ENCODE measurements at regions of chr2 and their contacts with region 1.

Region 1: GRCh38 chr2:157509744-157510143 is 65.9 kb upstream of the CYTIP start:
- DNase-seq: no peak
- ATAC-seq: no peak
- H3K4me3 ChIP-seq: no peak overlapping the region
- H3K4me3 Mint-ChIP-seq: no peak overlapping the region
- H3K27ac ChIP-seq: no peak overlapping the region
- H3K27ac Mint-ChIP-seq: no peak overlapping the region
- H3K4me1 ChIP-seq: no peaks in the 10 kb centered on the region
- H3K4me1 Mint-ChIP-seq: no peaks in the 10 kb centered on the region
- H3K27me3 ChIP-seq: peaks cover 0 to 3% of the 10 kb centered on the region in 2 experiments
- H3K27me3 Mint-ChIP-seq: peaks cover 11% of the 10 kb centered on the region
- CTCF ChIP-seq: peak; percentile 17

Region 2: DNA sequence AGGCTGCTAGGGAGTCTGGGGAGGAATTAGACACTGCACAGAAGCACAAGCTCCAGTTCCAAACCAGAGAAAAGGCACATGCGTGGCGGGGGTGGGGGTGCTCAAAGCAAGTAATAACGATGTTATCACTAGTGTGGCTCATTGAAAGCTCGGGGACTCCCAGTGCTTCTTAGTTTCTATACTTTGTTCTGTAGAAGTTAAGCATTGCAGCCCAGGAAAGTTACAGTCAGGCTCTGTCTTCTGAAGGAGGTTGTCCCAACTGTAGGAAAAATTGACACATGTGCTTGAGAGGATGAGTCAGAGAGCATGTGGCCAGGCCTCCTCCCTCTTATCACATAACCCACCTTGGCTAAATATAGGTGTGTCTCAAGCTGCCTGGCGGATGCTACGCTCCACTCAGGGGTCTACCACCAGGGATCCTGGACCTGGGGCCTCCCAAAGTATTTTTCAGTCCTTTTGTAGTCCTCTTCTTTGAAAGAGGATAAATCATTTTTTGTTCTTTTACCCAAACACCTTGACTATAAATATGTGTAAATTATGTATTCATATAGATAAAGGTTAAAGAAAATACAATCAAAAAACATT is 248.5 kb before region 1 on chr2:
- CTCF ChIA-PET with region 1: no interaction called
- POLR2A ChIA-PET with region 1: no interaction called
- intact Hi-C with region 1: no loop called
- DNase-seq: no peak
- ATAC-seq: no peak
- H3K4me3 ChIP-seq: no peak overlapping the region
- H3K4me3 Mint-ChIP-seq: no peak overlapping the region
- H3K27ac ChIP-seq: no peak overlapping the region
- H3K27ac Mint-ChIP-seq: no peak overlapping the region
- H3K4me1 ChIP-seq: peaks cover 5% of the 10 kb centered on the region
- H3K4me1 Mint-ChIP-seq: peaks cover 8% of the 10 kb centered on the region
- H3K27me3 ChIP-seq: no peaks in the 10 kb centered on the region
- H3K27me3 Mint-ChIP-seq: no peaks in the 10 kb centered on the region
- CTCF ChIP-seq: no peak

Region 3: GRCh38 chr2:158099716-158100115 is 590.0 kb after region 1 on chr2:
- CTCF ChIA-PET with region 1: no interaction called
- POLR2A ChIA-PET with region 1: no interaction called
- intact Hi-C with region 1: no loop called
- DNase-seq: no peak
- ATAC-seq: no peak
- H3K4me3 ChIP-seq: no peak overlapping the region
- H3K4me3 Mint-ChIP-seq: no peak overlapping the region
- H3K27ac ChIP-seq: no peak overlapping the region
- H3K27ac Mint-ChIP-seq: no peak overlapping the region
- H3K4me1 ChIP-seq: no peaks in the 10 kb centered on the region
- H3K4me1 Mint-ChIP-seq: no peaks in the 10 kb centered on the region
- H3K27me3 ChIP-seq: no peaks in the 10 kb centered on the region
- H3K27me3 Mint-ChIP-seq: peaks cover 4% of the 10 kb centered on the region
- CTCF ChIP-seq: no peak

Region 4: DNA sequence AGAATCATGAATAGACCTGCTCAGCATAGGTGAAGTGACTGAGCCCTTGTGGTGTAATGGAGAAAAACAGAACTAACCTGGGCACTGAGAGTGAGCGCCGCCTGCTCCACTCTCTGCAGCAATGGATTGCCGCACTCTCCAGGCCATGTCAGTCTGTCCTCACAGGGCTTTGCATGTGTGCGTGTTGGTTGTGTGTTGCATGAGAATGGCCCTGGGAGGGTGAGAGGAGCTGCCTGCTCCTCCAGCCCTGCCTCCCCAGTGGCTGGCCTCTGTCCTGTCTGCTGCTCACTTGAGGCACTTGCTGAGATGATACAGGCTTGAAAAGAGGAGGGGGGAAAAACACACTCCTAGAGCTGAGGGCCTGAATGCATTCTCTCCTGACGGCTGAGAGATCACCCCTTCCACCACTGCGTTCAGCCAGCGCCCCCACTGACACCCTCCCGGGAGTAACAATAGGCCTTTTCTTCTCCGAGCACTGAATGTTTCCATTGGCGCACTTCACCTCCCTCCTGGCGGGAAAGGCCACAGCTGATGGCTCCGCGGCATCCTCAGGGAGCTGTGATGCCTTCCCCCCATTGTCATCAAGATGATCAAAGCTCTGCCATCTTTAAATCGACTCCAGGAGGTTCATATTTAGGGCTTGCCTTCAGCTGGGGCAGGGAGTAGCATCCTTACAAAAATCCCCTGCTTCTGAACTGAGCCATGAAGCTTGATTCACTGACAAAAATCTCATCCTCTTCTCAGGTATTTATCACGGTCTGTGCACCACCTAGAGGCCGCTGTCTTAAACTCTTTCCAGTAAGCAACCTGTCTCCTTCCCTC is 1235.5 kb after region 1 on chr2:
- CTCF ChIA-PET with region 1: no interaction called
- POLR2A ChIA-PET with region 1: no interaction called
- intact Hi-C with region 1: loop called in 1 of 2 experiments (anchors 10 kb)
- DNase-seq: peak in 12 of 14 experiments; percentile 3 to 56 (median 17)
- ATAC-seq: peak; percentile 43
- H3K4me3 ChIP-seq: no peak overlapping the region
- H3K4me3 Mint-ChIP-seq: no peak overlapping the region
- H3K27ac ChIP-seq: no peak overlapping the region
- H3K27ac Mint-ChIP-seq: no peak overlapping the region
- H3K4me1 ChIP-seq: no peaks in the 10 kb centered on the region
- H3K4me1 Mint-ChIP-seq: no peaks in the 10 kb centered on the region
- H3K27me3 ChIP-seq: peaks cover 14 to 20% of the 10 kb centered on the region in 2 experiments
- H3K27me3 Mint-ChIP-seq: peaks cover 46% of the 10 kb centered on the region
- CTCF ChIP-seq: no peak